Uterus (tissue), 4 donors: ENCODE measurements at regions of chr1 and their contacts with region 1.

Region 1: GRCh38 chr1:156677616-156678596 is 699 bp upstream of the NES start:
- DNase-seq: peak; percentile 80 to 84
- H3K4me3 ChIP-seq: peak overlapping the region; percentile 39 to 50
- H3K27ac ChIP-seq: peak overlapping the region; percentile 83 to 90
- H3K4me1 ChIP-seq: no peaks in the 10 kb centered on the region
- H3K27me3 ChIP-seq: no peaks in the 10 kb centered on the region
- CTCF ChIP-seq: peak; percentile 92 to 96 (median 94)
- POLR2A ChIP-seq: peak in 1 of 2 donors; percentile 25

Region 2: DNA sequence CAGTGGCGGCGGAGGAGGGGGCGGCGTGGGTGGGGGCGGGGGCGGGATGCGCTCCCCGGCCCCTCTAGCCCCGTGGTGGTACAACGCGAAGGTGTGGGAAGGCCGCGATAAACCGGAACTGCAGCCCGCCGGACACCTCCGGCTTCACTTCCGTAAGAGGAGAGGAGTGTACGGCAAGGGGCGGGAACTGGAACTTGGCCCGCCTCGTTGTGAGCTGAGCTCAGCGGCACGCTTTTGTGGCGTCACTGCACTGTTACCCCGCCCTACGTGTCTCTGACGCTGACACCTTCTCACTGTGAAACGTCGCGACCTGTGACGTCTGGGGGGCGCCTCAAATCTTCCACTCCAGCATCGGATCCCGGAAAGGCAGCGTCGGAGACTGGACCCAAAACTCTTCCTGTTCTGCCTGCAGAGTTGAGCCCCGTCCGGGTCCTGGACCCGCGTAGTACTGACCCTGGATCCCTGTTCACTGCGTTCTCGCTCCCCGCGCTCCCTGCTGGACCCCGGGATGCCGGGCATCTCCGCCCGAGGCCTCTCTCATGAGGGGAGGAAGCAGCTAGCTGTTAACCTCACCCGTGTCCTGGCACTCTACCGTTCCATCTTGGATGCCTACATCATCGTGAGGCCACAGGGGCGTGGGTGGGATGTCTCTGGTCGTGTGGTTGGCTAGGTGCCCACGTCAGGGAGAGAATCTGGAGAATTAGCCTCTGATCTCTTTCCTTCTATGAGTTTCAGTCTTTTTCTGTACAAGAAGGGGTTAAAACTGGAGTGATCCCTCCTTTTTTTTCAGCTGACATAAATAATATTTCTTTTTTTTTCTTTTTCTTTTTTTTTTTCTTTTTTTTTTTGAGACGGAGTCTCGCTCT is 50.9 kb after region 1 on chr1 and contains the start of gene ISG20L2:
- intact Hi-C with region 1: loop called (anchors 10 kb)
- DNase-seq: peak; percentile 97 to 98
- H3K4me3 ChIP-seq: peak within 1 kb of the TSS; percentile 80 to 87
- H3K27ac ChIP-seq: peak within 1 kb of the TSS; percentile 96 to 99
- H3K4me1 ChIP-seq: peaks cover 15% of the 10 kb centered on the region in 2 donors
- H3K27me3 ChIP-seq: no peaks in the 10 kb centered on the region
- CTCF ChIP-seq: peak in 2 of 4 experiments; percentile 2 to 8
- POLR2A ChIP-seq: peak; percentile 52 to 65
- total RNA-seq, gene ISG20L2: 3.6 to 24.8 (median 10.2) TPM